Activated CD4-positive, alpha-beta T cell treated with anti-CD3 and anti-CD28 coated beads for 36 hours (primary cell): ENCODE measurements at regions of chr1 and their contacts with region 1.

Region 1: DNA sequence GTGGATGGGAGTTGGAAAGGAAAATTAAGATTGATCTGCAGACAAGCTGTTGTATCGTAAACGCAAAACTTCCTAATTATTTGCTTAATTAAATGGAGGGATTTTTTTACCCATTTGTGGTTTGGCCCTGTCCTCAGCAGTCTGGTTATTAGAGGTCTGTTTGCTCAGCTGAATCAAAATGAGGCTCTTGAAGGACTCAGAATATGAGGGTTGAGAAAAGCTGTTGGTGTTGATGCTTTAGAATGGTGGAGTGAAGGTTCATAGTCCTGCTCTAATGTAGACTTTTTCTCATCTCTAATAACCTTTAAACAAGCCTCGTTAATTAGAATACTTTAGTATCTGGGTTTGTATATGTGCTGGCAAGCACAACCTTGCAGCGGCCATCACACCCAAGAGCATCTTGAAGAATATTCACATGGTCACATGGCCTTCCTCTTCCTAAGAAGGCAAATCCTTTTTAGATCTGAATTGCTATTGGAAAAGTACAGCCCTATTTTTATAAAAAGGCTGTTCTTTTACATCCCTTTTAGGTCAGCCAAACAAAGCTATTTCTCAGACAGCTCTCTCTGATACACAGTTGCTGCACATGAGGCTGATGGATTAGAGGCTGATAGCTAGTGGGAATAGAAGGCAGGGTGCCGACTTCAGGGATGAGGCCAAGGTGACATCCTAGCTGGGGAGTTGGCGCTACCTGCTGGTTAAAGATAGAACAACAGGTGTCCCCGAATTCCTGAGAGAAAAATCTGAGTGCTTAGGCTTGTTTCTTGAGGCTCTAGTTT is 53.8 kb downstream of the MACF1 start:
- DNase-seq: peak; percentile 75
- ATAC-seq: peak; percentile 74
- H3K4me3 Mint-ChIP-seq: no peak overlapping the region
- H3K27ac Mint-ChIP-seq: peak overlapping the region; percentile 51
- H3K4me1 Mint-ChIP-seq: peaks cover 37% of the 10 kb centered on the region
- H3K27me3 Mint-ChIP-seq: no peaks in the 10 kb centered on the region

Region 2: DNA sequence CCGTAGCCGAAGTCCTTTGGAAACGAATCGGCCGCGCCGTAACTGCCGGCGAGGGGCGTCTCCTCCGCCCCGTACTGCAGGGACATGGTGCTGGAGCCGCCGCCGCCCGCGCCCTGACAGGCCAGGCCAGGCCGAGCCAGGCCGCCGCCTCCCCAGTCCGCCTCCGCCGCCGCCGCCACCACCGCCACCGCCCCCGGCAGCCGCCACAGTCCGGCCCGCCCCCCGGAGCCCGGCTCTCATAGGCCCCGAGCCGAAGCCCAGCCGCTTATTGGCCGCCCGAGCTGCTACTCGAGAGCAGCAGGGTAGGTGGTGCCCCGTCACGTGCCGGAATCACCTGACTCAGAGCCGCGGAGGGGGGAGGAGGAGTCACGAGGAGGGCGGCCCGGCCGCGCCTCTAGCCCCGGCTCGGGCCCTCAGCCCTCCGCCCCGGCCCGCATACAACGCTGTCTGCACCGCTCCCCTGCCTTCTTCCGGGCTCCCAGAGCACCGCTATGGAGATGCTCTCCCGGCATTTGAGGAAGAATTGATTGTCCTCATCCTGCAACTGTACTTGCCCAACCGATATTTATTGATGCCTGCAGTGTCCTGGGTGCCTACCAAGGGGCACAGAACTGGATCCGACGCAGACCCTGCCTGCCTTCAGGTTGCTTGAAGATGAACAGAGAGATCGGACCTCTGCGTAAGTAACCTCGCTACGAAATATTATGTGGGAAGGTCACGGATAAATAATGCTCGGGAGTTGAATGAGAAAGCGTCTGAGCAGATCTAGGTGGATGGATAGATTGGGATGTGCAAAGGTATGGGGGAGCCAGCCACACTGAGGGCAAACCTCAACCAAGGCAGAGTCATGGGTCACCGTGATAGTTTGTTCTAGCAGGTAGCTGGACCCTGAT is 398.5 kb before region 1 on chr1 and contains the start of gene RRAGC:
- CTCF ChIA-PET with region 1: no interaction called
- POLR2A ChIA-PET with region 1: no interaction called
- intact Hi-C with region 1: loop called in 1 of 2 experiments (anchors 2 kb)
- DNase-seq: peak; percentile 99
- ATAC-seq: peak; percentile 98
- H3K4me3 Mint-ChIP-seq: peak within 1 kb of the TSS; percentile 98
- H3K27ac Mint-ChIP-seq: peak within 1 kb of the TSS; percentile 91
- H3K4me1 Mint-ChIP-seq: peaks cover 58% of the 10 kb centered on the region
- H3K27me3 Mint-ChIP-seq: no peaks in the 10 kb centered on the region
- total RNA-seq, gene RRAGC: 15.8 to 19.0 TPM

Region 3: DNA sequence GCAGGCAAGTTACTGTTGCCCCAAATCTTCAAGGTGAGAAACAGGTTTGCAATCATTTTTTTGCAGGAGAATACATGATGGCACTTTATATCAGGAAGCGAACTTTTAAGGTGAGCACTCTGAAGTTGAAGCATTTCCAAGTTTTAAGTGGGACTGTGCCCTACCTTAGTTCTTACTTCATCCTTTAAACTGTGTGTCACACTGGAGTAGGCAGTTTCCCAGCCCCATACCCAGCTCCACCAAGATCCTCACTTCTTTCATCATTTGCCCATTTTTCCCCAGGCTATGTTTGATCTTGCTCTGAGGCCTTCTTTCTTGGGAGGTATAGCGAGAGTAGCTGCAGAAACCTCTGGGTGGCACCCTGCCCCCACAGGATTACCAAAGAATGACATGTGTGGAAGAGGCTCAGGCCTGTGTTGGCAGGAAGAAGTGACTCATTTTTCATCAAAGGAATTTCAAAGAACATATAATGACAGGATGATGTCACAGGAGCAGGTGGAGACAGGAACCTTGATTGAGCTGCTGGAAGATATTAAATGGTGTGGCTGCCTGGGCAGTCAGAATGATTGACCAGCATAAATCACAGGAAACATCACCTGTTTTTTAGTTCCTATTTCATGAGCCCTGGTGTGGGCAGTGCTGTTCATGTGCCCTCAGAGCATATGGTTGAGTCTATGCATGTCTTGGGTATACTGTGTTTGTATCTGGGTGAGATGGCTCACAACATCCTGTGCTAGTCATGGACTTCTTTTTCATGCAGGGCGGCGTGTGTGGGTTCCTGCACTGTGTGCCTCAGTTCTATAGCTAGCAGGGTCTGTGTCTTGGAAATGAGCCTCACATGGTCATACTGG is 74.6 kb before region 1 on chr1:
- CTCF ChIA-PET with region 1: interaction called, 174 read pairs
- POLR2A ChIA-PET with region 1: interaction called, 4 read pairs
- intact Hi-C with region 1: loop called (anchors 1 to 2 kb)
- DNase-seq: peak; percentile 90
- ATAC-seq: peak; percentile 84
- H3K4me3 Mint-ChIP-seq: peak overlapping the region; percentile 30
- H3K27ac Mint-ChIP-seq: peak overlapping the region; percentile 98
- H3K4me1 Mint-ChIP-seq: peaks cover 50% of the 10 kb centered on the region
- H3K27me3 Mint-ChIP-seq: no peaks in the 10 kb centered on the region

Region 4: GRCh38 chr1:39204441-39205081 is 53.8 kb before region 1 on chr1 and contains the start of gene MACF1:
- CTCF ChIA-PET with region 1: interaction called, 10 read pairs
- POLR2A ChIA-PET with region 1: no interaction called
- intact Hi-C with region 1: loop called in 1 of 2 experiments (anchors 2 kb)
- DNase-seq: peak; percentile 61
- ATAC-seq: peak; percentile 53
- H3K4me3 Mint-ChIP-seq: peak within 1 kb of the TSS; percentile 84
- H3K27ac Mint-ChIP-seq: peak within 1 kb of the TSS; percentile 96
- H3K4me1 Mint-ChIP-seq: peaks cover 65% of the 10 kb centered on the region
- H3K27me3 Mint-ChIP-seq: no peaks in the 10 kb centered on the region
- total RNA-seq, gene MACF1: 192 to 195 TPM

Region 5: GRCh38 chr1:39238476-39238875 is 19.9 kb before region 1 on chr1:
- CTCF ChIA-PET with region 1: interaction called, 17 read pairs
- POLR2A ChIA-PET with region 1: no interaction called
- intact Hi-C with region 1: no loop called
- DNase-seq: no peak
- ATAC-seq: no peak
- H3K4me3 Mint-ChIP-seq: no peak overlapping the region
- H3K27ac Mint-ChIP-seq: peak overlapping the region; percentile 13
- H3K4me1 Mint-ChIP-seq: peaks cover 36% of the 10 kb centered on the region
- H3K27me3 Mint-ChIP-seq: no peaks in the 10 kb centered on the region